MCF 10A (cell line): ENCODE measurements at regions of chr1 and their contacts with region 1.

Region 1: GRCh38 chr1:214923278-214923915 is 159.1 kb upstream of the KCNK2 start:
- DNase-seq: no peak
- H3K4me3 Mint-ChIP-seq: no peak overlapping the region
- H3K27ac Mint-ChIP-seq: no peak overlapping the region
- H3K4me1 Mint-ChIP-seq: peaks cover 14% of the 10 kb centered on the region
- H3K27me3 Mint-ChIP-seq: no peaks in the 10 kb centered on the region
- CTCF ChIP-seq: no peak

Region 2: DNA sequence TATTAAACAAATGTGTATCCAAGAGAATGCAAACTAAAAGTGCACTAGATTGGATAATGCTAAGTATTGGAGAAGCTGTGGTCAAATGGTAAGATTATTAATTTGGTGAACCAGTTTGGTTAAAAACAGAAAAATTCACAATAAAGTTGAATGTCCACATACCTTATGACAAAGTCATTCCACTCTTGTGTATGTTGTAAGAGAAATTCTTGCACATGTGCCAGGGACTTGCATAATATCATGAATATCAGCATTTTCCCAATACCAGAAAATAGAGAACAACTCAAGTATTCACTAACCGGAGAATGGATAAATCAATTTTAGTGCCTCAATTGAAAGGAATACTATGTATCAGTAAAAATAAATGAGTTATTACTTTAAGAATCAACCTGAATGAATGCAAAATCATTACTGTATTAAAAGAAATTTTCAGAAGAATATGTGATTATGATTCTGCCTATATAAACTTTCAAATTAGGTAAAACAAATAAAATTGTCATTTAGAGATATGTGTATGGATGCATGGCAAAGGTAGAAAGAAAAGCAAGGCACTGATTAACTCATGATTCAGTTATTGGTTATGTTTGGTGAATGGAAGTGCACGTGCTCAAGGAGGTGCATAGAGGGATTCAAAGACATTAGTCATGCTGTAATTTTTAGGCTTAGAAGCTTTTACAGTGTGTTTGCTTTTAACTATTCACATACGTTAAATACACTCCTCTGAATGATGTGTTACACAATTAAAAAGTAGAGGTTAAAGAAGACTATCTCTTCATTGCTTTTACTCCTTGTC is 58.3 kb before region 1 on chr1:
- CTCF ChIA-PET with region 1: no interaction called
- POLR2A ChIA-PET with region 1: interaction called, 3 read pairs
- intact Hi-C with region 1: loop called (anchors 5 kb)
- DNase-seq: peak; percentile 97
- H3K4me3 Mint-ChIP-seq: peak overlapping the region; percentile 17
- H3K27ac Mint-ChIP-seq: peak overlapping the region; percentile 37
- H3K4me1 Mint-ChIP-seq: peaks cover 49% of the 10 kb centered on the region
- H3K27me3 Mint-ChIP-seq: no peaks in the 10 kb centered on the region
- CTCF ChIP-seq: no peak

Region 3: GRCh38 chr1:214939180-214939579 is 15.8 kb after region 1 on chr1:
- CTCF ChIA-PET with region 1: interaction called, 10 read pairs
- POLR2A ChIA-PET with region 1: interaction called, 5 read pairs
- intact Hi-C with region 1: no loop called
- DNase-seq: no peak
- H3K4me3 Mint-ChIP-seq: no peak overlapping the region
- H3K27ac Mint-ChIP-seq: no peak overlapping the region
- H3K4me1 Mint-ChIP-seq: no peaks in the 10 kb centered on the region
- H3K27me3 Mint-ChIP-seq: no peaks in the 10 kb centered on the region
- CTCF ChIP-seq: no peak